GM10248 (cell line): ENCODE measurements at regions of chr10 and their contacts with region 1.

Region 1: GRCh38 chr10:97553575-97554031 is 19.0 kb upstream of the ANKRD2 start:
- DNase-seq: peak; percentile 65
- CTCF ChIP-seq: peak; percentile 78

Region 2: GRCh38 chr10:97463363-97464132 is 90.1 kb before region 1 on chr10:
- CTCF ChIA-PET with region 1: interaction called, 44 read pairs
- POLR2A ChIA-PET with region 1: interaction called, 3 read pairs
- DNase-seq: peak; percentile 58
- CTCF ChIP-seq: peak; percentile 75

Region 3: GRCh38 chr10:97534746-97535367 is 18.7 kb before region 1 on chr10:
- CTCF ChIA-PET with region 1: interaction called, 108 read pairs
- POLR2A ChIA-PET with region 1: interaction called, 3 read pairs
- DNase-seq: peak; percentile 77
- CTCF ChIP-seq: peak; percentile 70

Region 4: GRCh38 chr10:97543025-97543575 is 10.5 kb before region 1 on chr10:
- CTCF ChIA-PET with region 1: interaction called, 108 read pairs
- POLR2A ChIA-PET with region 1: no interaction called
- DNase-seq: no peak
- CTCF ChIP-seq: no peak

Region 5: DNA sequence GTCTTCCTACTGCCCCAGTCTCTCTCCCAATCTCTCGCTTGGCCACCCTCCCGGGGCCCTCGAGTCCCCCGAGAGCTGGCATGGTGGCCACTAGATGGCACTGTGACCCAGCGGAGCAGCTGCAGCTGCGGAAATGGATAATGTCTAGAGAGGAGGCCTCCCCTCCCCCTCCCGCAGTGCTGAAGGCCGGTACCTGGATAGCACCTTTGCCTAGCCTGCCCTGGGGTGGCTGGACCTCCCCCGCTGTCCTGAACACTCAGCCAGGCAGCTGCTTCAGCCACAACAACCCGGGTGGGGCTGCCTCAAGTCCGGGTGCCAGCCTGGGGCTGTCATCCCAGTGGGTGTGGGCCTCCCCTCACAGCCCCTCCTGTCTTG is 361.2 kb after region 1 on chr10:
- CTCF ChIA-PET with region 1: no interaction called
- POLR2A ChIA-PET with region 1: no interaction called
- DNase-seq: peak; percentile 85
- CTCF ChIP-seq: peak; percentile 89